ENCODE measurements at regions of chr17 and their contacts with region 1.

Region 1: GRCh38 chr17:47949136-47949759 is 7.9 kb downstream of the PNPO start:
- DNase-seq: peak; percentile 88
- H3K4me3 Mint-ChIP-seq: peak overlapping the region; percentile 49
- H3K27ac Mint-ChIP-seq: peak overlapping the region; percentile 67
- H3K4me1 Mint-ChIP-seq: peaks cover 41% of the 10 kb centered on the region
- H3K27me3 Mint-ChIP-seq: no peaks in the 10 kb centered on the region

Region 2: DNA sequence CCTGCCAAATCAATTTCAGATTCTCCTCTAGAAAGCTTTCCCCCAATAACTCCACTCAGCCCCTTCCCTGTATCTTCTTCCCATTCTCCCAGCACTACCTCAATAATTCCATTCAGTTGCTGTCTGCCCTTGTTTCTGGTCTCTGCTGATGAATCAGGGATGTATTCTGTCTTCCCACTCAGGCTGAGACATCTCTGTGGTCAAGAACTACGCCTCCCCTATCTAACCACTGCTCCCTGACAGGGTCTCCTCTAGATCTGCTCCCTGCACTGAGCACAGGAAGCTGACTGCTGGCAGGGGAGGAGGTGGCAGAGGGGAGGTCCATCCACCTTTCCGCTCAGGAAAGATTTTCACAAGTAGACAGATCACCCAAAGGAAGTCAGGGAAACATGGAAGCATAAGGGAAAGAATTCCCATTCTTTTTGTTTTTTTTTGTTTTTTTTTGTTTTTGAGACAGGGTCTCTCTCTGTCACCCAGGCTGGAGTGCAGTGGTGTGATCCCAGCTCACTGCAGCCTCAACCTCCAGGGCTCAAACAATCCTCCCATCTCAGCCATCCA is 70.1 kb before region 1 on chr17:
- CTCF ChIA-PET with region 1: no interaction called
- intact Hi-C with region 1: no loop called
- DNase-seq: no peak
- H3K4me3 Mint-ChIP-seq: no peak overlapping the region
- H3K27ac Mint-ChIP-seq: no peak overlapping the region
- H3K4me1 Mint-ChIP-seq: peaks cover 19% of the 10 kb centered on the region
- H3K27me3 Mint-ChIP-seq: peaks cover 14% of the 10 kb centered on the region

Region 3: GRCh38 chr17:47978324-47978723 is 29.1 kb after region 1 on chr17:
- CTCF ChIA-PET with region 1: interaction called, 18 read pairs
- intact Hi-C with region 1: no loop called
- DNase-seq: peak; percentile 60
- H3K4me3 Mint-ChIP-seq: no peak overlapping the region
- H3K27ac Mint-ChIP-seq: no peak overlapping the region
- H3K4me1 Mint-ChIP-seq: peaks cover 1% of the 10 kb centered on the region
- H3K27me3 Mint-ChIP-seq: no peaks in the 10 kb centered on the region

Region 4: DNA sequence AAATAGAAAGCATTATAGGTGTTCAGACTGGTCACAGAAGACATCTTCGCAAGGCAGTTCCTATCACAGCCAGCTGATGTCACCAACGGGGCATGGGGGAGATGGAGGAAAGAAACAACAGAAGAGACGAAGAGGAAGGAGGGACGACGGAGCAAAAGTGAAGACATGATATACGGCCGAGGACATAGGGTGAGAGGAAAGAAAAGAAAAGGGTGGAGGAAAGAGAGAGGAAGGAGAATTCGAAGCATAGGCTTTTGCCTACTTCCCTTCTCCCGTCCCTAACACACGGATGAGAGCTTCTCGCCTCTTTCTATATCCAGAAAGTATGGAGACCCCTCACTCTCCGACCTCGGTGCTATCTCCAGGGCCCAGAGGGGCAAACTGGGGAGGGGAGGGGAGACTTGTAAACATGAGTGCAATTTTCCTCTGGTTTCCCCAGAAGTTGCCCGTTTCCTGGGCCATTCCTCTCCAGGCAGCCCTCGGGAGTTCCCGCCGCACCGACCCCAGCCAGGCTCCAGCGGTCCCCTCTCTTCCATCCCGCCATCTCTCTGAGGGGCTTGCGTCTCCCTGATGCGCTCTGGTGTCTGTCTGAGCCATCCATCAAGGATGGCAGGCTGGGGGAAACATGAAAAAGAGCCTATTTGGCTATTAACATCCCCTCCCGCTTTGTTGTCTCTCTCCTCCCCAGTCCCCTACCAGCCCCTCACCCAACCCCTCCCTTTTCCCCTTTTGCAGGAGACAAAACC is 62.3 kb after region 1 on chr17:
- CTCF ChIA-PET with region 1: interaction called, 39 read pairs
- intact Hi-C with region 1: loop called (anchors 2 kb)
- DNase-seq: peak; percentile 72
- H3K4me3 Mint-ChIP-seq: peak overlapping the region; percentile 70
- H3K27ac Mint-ChIP-seq: no peak overlapping the region
- H3K4me1 Mint-ChIP-seq: peaks cover 12% of the 10 kb centered on the region
- H3K27me3 Mint-ChIP-seq: peaks cover 50% of the 10 kb centered on the region

Measured in activated naive CD4-positive, alpha-beta T cell treated with anti-CD3 and anti-CD28 coated beads for 36 hours (primary cell).